Activated naive CD4-positive, alpha-beta T cell treated with anti-CD3 and anti-CD28 coated beads for 36 hours (primary cell): ENCODE measurements at regions of chr3 and their contacts with region 1.

Region 1: DNA sequence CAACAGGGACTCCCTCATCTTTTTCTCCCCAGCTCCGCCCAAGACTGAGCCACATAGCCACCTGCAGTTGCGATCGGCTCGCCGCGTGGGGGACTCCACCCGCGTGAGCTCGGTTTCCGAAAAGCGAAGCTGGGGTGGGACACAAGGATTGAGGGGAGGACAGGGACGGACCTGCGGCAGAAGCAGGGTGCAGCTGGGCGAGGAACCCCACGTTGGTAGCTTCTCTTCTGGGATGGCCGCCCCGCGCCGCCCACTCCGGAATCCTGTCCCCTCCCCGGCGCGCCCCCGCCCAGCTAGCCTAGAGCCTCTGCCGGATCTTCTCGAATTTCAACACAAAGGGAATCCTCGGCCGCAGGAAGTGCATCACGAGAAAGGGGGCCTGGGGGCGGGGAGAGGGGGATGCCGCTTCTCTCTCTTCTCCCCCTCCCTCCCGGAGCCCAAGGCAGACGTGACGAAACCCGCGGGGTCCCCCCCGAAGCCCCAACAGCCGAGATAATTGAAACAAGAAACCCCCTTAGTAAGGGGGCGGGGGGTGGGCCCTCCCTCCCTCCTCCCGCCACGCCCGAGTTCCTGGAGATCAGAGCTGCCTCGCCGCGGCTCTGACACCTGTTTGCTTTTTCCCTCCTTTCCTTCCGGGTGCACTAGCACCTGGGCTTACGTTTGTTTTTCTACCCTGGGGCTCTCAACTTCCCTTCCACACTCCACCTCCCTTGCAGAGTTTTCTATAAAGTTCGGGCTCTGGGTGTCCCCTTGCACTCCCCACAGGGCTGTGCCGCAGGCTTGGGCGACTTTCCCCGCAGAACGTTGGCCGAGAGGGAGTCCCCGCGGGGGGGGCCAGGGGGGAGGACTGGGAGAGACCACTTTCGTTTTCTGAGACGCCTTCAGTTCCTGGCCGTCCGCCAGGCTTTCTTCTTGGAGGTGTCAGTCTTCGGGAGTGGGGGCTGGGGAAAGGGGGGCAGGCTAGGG is 1.3 kb upstream of the KCNH8 start:
- DNase-seq: peak; percentile 78
- H3K4me3 Mint-ChIP-seq: peak overlapping the region; percentile 81
- H3K27ac Mint-ChIP-seq: peak overlapping the region; percentile 54
- H3K4me1 Mint-ChIP-seq: peaks cover 15% of the 10 kb centered on the region
- H3K27me3 Mint-ChIP-seq: peaks cover 34% of the 10 kb centered on the region

Region 2: GRCh38 chr3:18134386-18135062 is 1012.4 kb before region 1 on chr3:
- CTCF ChIA-PET with region 1: no interaction called
- intact Hi-C with region 1: no loop called
- DNase-seq: no peak
- H3K4me3 Mint-ChIP-seq: no peak overlapping the region
- H3K27ac Mint-ChIP-seq: no peak overlapping the region
- H3K4me1 Mint-ChIP-seq: peaks cover 8% of the 10 kb centered on the region
- H3K27me3 Mint-ChIP-seq: no peaks in the 10 kb centered on the region

Region 3: GRCh38 chr3:18780959-18781358 is 366.0 kb before region 1 on chr3:
- CTCF ChIA-PET with region 1: no interaction called
- intact Hi-C with region 1: loop called (anchors 5 kb)
- DNase-seq: no peak
- H3K4me3 Mint-ChIP-seq: peak overlapping the region; percentile 74
- H3K27ac Mint-ChIP-seq: peak overlapping the region; percentile 77
- H3K4me1 Mint-ChIP-seq: peaks cover 43% of the 10 kb centered on the region
- H3K27me3 Mint-ChIP-seq: no peaks in the 10 kb centered on the region

Region 4: GRCh38 chr3:19105826-19106225 is 41.1 kb before region 1 on chr3:
- CTCF ChIA-PET with region 1: no interaction called
- intact Hi-C with region 1: loop called (anchors 2 kb)
- DNase-seq: no peak
- H3K4me3 Mint-ChIP-seq: no peak overlapping the region
- H3K27ac Mint-ChIP-seq: no peak overlapping the region
- H3K4me1 Mint-ChIP-seq: no peaks in the 10 kb centered on the region
- H3K27me3 Mint-ChIP-seq: no peaks in the 10 kb centered on the region

Region 5: DNA sequence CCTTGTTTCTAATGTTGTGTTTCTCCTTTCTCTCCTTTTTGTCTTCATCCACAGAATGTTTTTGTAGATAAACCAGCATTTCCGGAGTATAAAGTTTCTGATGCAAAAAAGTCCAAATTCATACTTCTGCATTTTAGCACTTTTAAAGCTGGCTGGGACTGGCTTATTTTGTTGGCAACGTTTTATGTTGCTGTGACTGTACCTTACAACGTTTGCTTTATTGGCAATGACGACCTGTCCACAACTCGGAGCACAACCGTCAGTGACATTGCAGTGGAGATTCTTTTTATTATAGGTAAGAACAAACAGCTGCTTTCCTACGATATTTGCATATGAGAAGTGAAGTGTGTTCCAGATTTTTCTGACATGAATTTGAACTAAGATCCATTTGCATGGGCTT is 200.7 kb after region 1 on chr3:
- CTCF ChIA-PET with region 1: no interaction called
- intact Hi-C with region 1: no loop called
- DNase-seq: no peak
- H3K4me3 Mint-ChIP-seq: no peak overlapping the region
- H3K27ac Mint-ChIP-seq: no peak overlapping the region
- H3K4me1 Mint-ChIP-seq: no peaks in the 10 kb centered on the region
- H3K27me3 Mint-ChIP-seq: peaks cover 6% of the 10 kb centered on the region